ENCODE measurements at regions of chr6 and their contacts with region 1.

Region 1: GRCh38 chr6:14822679-14823078 is 423.2 kb upstream of the JARID2 start:
- DNase-seq: no peak
- ATAC-seq: no peak
- H3K4me3 Mint-ChIP-seq: no peak overlapping the region
- H3K27ac Mint-ChIP-seq: no peak overlapping the region
- H3K4me1 Mint-ChIP-seq: peaks cover 0 to 2% (median 0%) of the 10 kb centered on the region in 4 donors
- H3K27me3 Mint-ChIP-seq: peaks cover 0 to 6% (median 1%) of the 10 kb centered on the region in 5 donors

Region 2: DNA sequence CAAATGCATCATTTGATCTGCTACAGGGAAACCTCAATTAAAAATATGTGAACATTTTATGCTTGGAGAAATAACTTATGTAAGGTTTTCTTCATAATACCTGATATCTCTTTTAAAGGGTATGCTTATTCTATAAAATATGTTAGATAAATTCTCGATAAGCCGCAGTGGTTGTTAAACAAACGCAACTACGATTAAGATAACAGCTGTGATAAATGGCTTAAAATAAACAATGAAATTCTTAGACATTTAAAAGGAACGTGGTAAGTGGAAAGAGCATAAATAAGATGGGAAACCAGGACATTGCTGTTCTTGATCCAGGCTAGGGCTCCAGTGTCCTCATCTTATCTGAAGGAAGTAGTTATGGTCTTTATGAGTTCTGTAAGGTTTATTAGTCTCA is 289.2 kb before region 1 on chr6:
- POLR2A ChIA-PET with region 1: interaction called, 11 read pairs
- DNase-seq: no peak
- ATAC-seq: no peak
- H3K4me3 Mint-ChIP-seq: no peak overlapping the region
- H3K27ac Mint-ChIP-seq: no peak overlapping the region
- H3K4me1 Mint-ChIP-seq: peaks cover 0 to 3% (median under 1%) of the 10 kb centered on the region in 4 donors
- H3K27me3 Mint-ChIP-seq: no peaks in the 10 kb centered on the region